Aorta (tissue), 5 donors: ENCODE measurements at regions of chr7 and their contacts with region 1.

Region 1: GRCh38 chr7:19117091-19117869 is at the start of gene TWIST1:
- DNase-seq: peak; percentile 79 to 90
- ATAC-seq: peak; percentile 84
- H3K4me3 ChIP-seq: peak within 1 kb of the TSS; percentile 68 to 90
- H3K27ac ChIP-seq: peak within 1 kb of the TSS; percentile 2 to 61
- H3K4me1 ChIP-seq: no peaks in the 10 kb centered on the region
- H3K27me3 ChIP-seq: no peaks in the 10 kb centered on the region
- total RNA-seq, gene TWIST1: 8.5 to 12.3 TPM

Region 2: DNA sequence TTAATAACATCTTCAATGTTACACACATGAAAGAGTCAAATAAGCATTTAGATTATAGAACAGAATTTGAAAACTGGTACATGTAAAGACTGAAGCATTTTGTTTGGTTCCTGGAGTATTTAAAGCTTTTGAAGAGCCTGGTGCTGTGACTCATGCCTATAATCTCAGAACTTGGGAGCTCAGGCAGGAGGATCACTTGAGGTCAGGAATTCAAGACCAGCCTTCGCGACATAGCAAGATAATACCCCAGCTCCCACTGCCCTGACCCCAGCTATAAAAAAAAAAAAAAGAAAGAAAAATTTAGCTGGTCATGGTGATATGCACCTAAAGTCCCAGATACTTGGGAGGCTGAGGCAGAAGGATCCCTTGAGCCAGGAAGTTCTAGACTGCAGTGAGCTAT is 534.0 kb before region 1 on chr7:
- intact Hi-C with region 1: loop called in 1 of 2 experiments (anchors 10 kb)
- DNase-seq: no peak
- ATAC-seq: no peak
- H3K4me3 ChIP-seq: no peak overlapping the region
- H3K27ac ChIP-seq: no peak overlapping the region
- H3K4me1 ChIP-seq: peaks cover 0 to 4% of the 10 kb centered on the region in 2 donors
- H3K27me3 ChIP-seq: no peaks in the 10 kb centered on the region

Region 3: GRCh38 chr7:18693406-18693805 is 423.9 kb before region 1 on chr7:
- intact Hi-C with region 1: loop called (anchors 10 kb)
- DNase-seq: no peak
- ATAC-seq: peak; percentile 87
- H3K4me3 ChIP-seq: no peak overlapping the region
- H3K27ac ChIP-seq: no peak overlapping the region
- H3K4me1 ChIP-seq: no peaks in the 10 kb centered on the region
- H3K27me3 ChIP-seq: no peaks in the 10 kb centered on the region

Region 4: GRCh38 chr7:18978108-18978495 is 139.2 kb before region 1 on chr7:
- intact Hi-C with region 1: loop called in 1 of 2 experiments (anchors 10 kb)
- DNase-seq: no peak
- ATAC-seq: peak; percentile 78
- H3K4me3 ChIP-seq: no peak overlapping the region
- H3K27ac ChIP-seq: peak overlapping the region in 1 of 2 donors; percentile 82
- H3K4me1 ChIP-seq: peaks cover 2 to 8% of the 10 kb centered on the region in 2 donors
- H3K27me3 ChIP-seq: no peaks in the 10 kb centered on the region

Region 5: DNA sequence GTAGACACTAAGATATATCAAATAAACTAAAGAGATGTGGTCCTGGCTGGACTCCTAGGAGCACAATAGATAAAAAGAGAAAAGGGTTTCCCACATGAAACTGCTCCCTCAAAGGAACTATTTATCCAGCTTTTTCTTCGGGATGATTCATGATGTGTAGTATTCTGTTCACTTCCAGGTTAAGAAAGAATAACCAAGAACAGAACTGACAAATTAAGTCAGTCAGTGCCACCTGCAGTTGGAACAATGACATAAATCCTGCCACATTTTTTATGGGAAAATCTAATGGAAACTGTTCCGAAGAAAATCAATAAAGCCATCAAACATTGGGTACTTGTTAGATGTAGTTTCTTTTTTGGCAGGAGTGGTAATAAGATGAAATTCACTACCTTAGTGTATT is 504.5 kb after region 1 on chr7:
- intact Hi-C with region 1: no loop called
- DNase-seq: no peak
- ATAC-seq: no peak
- H3K4me3 ChIP-seq: no peak overlapping the region
- H3K27ac ChIP-seq: no peak overlapping the region
- H3K4me1 ChIP-seq: no peaks in the 10 kb centered on the region
- H3K27me3 ChIP-seq: no peaks in the 10 kb centered on the region